Activated CD4-positive, alpha-beta T cell treated with anti-CD3 and anti-CD28 coated beads for 36 hours (primary cell): ENCODE measurements at regions of chr6 and their contacts with region 1.

Region 1: DNA sequence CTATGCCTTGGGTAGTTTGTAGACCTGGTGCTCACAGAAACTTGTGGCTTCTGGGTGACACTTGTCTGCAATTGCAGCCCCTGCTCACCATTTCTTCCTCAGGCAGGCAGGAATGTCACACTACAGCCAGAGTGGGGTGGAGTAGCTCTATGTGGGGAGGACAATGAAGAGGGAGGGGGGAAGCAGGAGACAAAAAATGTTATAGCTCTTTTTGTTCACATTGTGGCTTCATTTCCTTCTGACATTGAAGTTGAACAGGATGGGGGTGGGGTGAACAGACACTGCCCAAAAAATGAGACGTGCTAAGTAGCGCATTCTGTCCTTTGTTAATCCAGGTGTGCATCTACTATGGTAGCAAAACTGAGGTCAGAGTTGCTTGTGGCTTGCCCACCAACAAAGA is at the start of gene THEMIS:
- DNase-seq: peak; percentile 64
- ATAC-seq: peak; percentile 67
- H3K4me3 Mint-ChIP-seq: peak within 1 kb of the TSS; percentile 91
- H3K27ac Mint-ChIP-seq: peak within 1 kb of the TSS; percentile 97
- H3K4me1 Mint-ChIP-seq: peaks cover 66% of the 10 kb centered on the region
- H3K27me3 Mint-ChIP-seq: no peaks in the 10 kb centered on the region
- total RNA-seq, gene THEMIS: 22.9 to 24.5 TPM

Region 2: GRCh38 chr6:127811900-127812570 is 88.9 kb before region 1 on chr6:
- CTCF ChIA-PET with region 1: no interaction called
- POLR2A ChIA-PET with region 1: no interaction called
- intact Hi-C with region 1: loop called in 1 of 2 experiments (anchors 2 kb)
- DNase-seq: peak; percentile 38
- ATAC-seq: no peak
- H3K4me3 Mint-ChIP-seq: peak overlapping the region; percentile 36
- H3K27ac Mint-ChIP-seq: peak overlapping the region; percentile 71
- H3K4me1 Mint-ChIP-seq: peaks cover 88% of the 10 kb centered on the region
- H3K27me3 Mint-ChIP-seq: no peaks in the 10 kb centered on the region

Region 3: GRCh38 chr6:127879685-127880084 is 21.2 kb before region 1 on chr6:
- CTCF ChIA-PET with region 1: interaction called, 3 read pairs
- POLR2A ChIA-PET with region 1: no interaction called
- intact Hi-C with region 1: loop called (anchors 1 kb)
- DNase-seq: peak; percentile 47
- ATAC-seq: peak; percentile 13
- H3K4me3 Mint-ChIP-seq: peak overlapping the region; percentile 65
- H3K27ac Mint-ChIP-seq: peak overlapping the region; percentile 76
- H3K4me1 Mint-ChIP-seq: peaks cover 78% of the 10 kb centered on the region
- H3K27me3 Mint-ChIP-seq: no peaks in the 10 kb centered on the region

Region 4: GRCh38 chr6:127938701-127939100 is 37.8 kb after region 1 on chr6:
- CTCF ChIA-PET with region 1: interaction called, 3 read pairs
- POLR2A ChIA-PET with region 1: no interaction called
- intact Hi-C with region 1: loop called in 1 of 2 experiments (anchors 5 kb)
- DNase-seq: no peak
- ATAC-seq: peak; percentile 15
- H3K4me3 Mint-ChIP-seq: no peak overlapping the region
- H3K27ac Mint-ChIP-seq: peak overlapping the region; percentile 48
- H3K4me1 Mint-ChIP-seq: peaks cover 47% of the 10 kb centered on the region
- H3K27me3 Mint-ChIP-seq: no peaks in the 10 kb centered on the region

Region 5: GRCh38 chr6:128095362-128095761 is 194.4 kb after region 1 on chr6:
- CTCF ChIA-PET with region 1: no interaction called
- POLR2A ChIA-PET with region 1: no interaction called
- intact Hi-C with region 1: no loop called
- DNase-seq: no peak
- ATAC-seq: no peak
- H3K4me3 Mint-ChIP-seq: no peak overlapping the region
- H3K27ac Mint-ChIP-seq: peak overlapping the region; percentile 23
- H3K4me1 Mint-ChIP-seq: peaks cover 16% of the 10 kb centered on the region
- H3K27me3 Mint-ChIP-seq: no peaks in the 10 kb centered on the region

Region 6: GRCh38 chr6:128327890-128328289 is 427.0 kb after region 1 on chr6:
- CTCF ChIA-PET with region 1: no interaction called
- POLR2A ChIA-PET with region 1: no interaction called
- intact Hi-C with region 1: loop called in 1 of 2 experiments (anchors 5 kb)
- DNase-seq: peak; percentile 30
- ATAC-seq: peak; percentile 80
- H3K4me3 Mint-ChIP-seq: no peak overlapping the region
- H3K27ac Mint-ChIP-seq: no peak overlapping the region
- H3K4me1 Mint-ChIP-seq: no peaks in the 10 kb centered on the region
- H3K27me3 Mint-ChIP-seq: no peaks in the 10 kb centered on the region